Heart right ventricle (tissue), 16 donors: ENCODE measurements at regions of chr17 and their contacts with region 1.

Region 1: DNA sequence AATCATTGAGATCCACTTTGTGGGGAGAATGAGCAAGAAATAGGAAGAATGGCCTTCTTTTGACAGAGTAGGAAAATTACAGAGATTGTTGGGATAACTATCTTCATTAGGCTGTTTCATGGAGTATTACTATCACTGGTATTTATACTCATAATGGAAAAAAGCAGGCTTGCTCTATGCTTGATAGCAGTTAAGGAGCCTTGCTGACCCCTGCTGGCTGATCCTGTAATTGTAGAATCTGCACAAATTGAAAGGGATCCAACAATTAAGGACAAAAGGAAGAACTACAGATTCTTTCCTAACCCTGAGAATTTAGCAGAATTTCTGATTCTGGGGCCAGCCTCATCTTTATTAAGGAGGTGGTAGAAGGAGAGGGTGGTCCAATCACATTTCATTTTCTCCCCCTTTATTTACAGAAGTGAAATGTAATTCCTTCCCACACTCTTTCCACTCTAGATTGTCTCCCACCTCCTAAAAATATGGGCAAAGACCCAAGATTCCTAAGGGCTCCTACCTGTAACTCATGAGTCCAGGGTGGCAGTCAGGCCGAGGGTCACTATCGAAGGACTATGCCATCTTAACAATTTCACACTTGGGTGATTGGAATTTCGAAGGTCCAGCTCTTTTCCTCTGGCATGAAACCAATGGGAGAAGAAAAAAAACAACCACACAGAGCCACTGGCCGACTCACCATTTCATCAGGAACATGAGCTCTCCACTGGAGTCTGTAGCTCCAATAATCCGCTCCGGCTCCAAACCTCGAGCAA is 26.3 kb downstream of the NFE2L1 start:
- DNase-seq: peak; percentile 52 to 84
- ATAC-seq: peak in 7 of 8 donors; percentile 78 to 92 (median 89)
- H3K4me3 ChIP-seq: no peak overlapping the region
- H3K27ac ChIP-seq: peak overlapping the region in 3 of 10 donors; percentile 7 to 45 (median 28)
- H3K4me1 ChIP-seq: peaks cover 0 to 10% (median 5%) of the 10 kb centered on the region in 9 donors
- H3K27me3 ChIP-seq: no peaks in the 10 kb centered on the region
- CTCF ChIP-seq: peak; percentile 73 to 92 (median 85)

Region 2: DNA sequence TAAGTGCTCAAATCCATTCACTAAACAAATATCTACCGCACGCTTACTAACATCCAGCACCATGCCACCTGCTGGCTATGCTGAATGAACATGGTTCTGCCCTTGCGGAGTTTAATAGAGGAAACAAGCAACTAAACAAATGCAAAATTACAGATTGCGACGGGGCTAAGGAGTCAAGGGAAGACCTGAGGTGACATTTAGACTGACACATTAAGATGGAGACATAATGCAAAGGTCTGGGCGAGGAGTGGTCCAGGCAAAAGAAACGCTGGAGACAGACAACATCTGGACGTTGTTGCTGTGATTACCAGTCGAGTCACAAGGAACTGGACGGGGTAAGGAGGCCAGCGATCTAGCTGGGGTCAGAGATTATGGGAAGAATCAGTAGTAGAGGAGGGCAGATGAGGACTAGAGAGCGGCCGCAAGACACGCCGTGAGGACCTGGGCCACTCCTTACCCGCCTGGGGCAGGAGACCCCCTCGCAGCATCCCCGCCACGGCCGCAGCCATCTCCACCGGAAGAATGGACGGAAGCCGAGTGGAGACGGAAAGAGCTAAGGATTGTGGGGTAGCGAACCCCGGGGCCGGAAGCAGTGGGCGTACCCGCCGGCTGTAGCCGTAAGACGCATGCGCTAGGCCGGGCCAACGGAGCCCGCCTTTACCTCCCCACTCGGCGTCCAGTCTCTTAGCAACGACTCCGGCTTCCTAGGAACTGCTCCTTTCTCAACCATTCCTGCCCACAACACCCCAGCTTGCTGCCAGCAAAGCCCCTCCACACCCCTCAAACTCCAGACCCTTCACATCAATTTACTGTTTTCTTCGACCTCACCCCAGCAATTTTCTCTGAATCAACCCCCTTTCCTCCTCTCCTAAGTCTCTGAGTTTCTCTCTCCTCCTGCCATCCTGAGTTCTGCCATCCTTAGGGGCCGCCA is 243.2 kb before region 1 on chr17 and contains the starts of genes LRRC46 and MRPL10:
- intact Hi-C with region 1: no loop called
- DNase-seq: peak; percentile 93 to 94
- ATAC-seq: peak; percentile 93 to 98 (median 97)
- H3K4me3 ChIP-seq: peak within 1 kb of the TSS; percentile 53 to 93 (median 75)
- H3K27ac ChIP-seq: peak within 1 kb of the TSS in 9 of 10 donors; percentile 28 to 90 (median 74)
- H3K4me1 ChIP-seq: peaks cover 8 to 48% (median 33%) of the 10 kb centered on the region in 9 donors
- H3K27me3 ChIP-seq: no peaks in the 10 kb centered on the region
- CTCF ChIP-seq: peak in 2 of 9 donors; percentile 12 to 17
- total RNA-seq, gene LRRC46: 0.14 to 0.53 (median 0.34) TPM in 7 of 10 donors, not detected in the others
- total RNA-seq, gene MRPL10: 44.8 to 72.3 (median 62.9) TPM

Region 3: GRCh38 chr17:47978324-47978723 is 96.2 kb before region 1 on chr17:
- intact Hi-C with region 1: no loop called
- DNase-seq: peak; percentile 42
- ATAC-seq: peak in 7 of 8 donors; percentile 58 to 77 (median 72)
- H3K4me3 ChIP-seq: no peak overlapping the region
- H3K27ac ChIP-seq: no peak overlapping the region
- H3K4me1 ChIP-seq: peaks cover 0 to 28% (median 2%) of the 10 kb centered on the region in 9 donors
- H3K27me3 ChIP-seq: no peaks in the 10 kb centered on the region
- CTCF ChIP-seq: peak; percentile 54 to 79 (median 75)

Region 4: DNA sequence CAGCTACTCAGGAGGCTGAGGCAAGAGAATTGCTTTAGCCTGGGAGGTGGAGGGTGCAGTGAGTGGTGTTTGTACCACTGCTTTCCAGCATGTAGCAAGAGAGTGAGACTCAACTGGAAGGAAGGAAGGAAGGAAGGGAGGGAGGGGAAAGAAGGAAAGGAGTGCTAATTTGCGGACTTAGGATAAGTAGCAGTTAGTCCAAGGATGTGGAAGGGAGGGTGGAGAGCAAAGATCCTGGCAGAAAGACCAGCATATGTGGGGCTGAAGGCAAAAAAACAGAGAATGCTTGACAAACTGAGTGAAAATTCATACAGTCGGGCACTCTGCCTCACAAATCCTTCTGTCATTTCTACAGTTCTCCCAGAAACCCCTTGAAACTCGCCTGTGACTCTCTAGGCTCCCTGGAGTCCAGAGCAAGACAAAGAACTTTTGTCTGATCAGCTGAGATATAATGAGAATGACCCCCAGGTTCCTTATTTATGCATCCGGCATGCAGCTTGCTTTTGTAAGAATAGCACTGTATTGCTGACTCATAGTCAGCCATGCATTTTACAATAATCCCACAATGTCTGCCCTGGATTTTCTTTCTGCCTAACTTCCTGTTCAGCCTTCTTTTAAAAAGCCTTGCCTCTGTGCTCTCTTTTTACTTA is 72.1 kb before region 1 on chr17:
- intact Hi-C with region 1: no loop called
- DNase-seq: no peak
- ATAC-seq: peak; percentile 38 to 89 (median 76)
- H3K4me3 ChIP-seq: no peak overlapping the region
- H3K27ac ChIP-seq: peak overlapping the region in 7 of 10 donors; percentile 35 to 90 (median 54)
- H3K4me1 ChIP-seq: peaks cover 0 to 71% (median 15%) of the 10 kb centered on the region in 9 donors
- H3K27me3 ChIP-seq: peaks cover 0 to 3% (median 0%) of the 10 kb centered on the region in 7 donors
- CTCF ChIP-seq: no peak

Region 5: GRCh38 chr17:48024937-48025906 is 49.3 kb before region 1 on chr17:
- intact Hi-C with region 1: loop called (anchors 1 to 2 kb)
- DNase-seq: peak; percentile 96 to 98
- ATAC-seq: peak; percentile 87 to 95 (median 92)
- H3K4me3 ChIP-seq: peak overlapping the region; percentile 27 to 60 (median 54)
- H3K27ac ChIP-seq: peak overlapping the region; percentile 32 to 89 (median 82)
- H3K4me1 ChIP-seq: peaks cover 18 to 51% (median 41%) of the 10 kb centered on the region in 9 donors
- H3K27me3 ChIP-seq: peaks cover 0 to 28% (median 16%) of the 10 kb centered on the region in 7 donors
- CTCF ChIP-seq: peak; percentile 53 to 88 (median 80)

Region 6: DNA sequence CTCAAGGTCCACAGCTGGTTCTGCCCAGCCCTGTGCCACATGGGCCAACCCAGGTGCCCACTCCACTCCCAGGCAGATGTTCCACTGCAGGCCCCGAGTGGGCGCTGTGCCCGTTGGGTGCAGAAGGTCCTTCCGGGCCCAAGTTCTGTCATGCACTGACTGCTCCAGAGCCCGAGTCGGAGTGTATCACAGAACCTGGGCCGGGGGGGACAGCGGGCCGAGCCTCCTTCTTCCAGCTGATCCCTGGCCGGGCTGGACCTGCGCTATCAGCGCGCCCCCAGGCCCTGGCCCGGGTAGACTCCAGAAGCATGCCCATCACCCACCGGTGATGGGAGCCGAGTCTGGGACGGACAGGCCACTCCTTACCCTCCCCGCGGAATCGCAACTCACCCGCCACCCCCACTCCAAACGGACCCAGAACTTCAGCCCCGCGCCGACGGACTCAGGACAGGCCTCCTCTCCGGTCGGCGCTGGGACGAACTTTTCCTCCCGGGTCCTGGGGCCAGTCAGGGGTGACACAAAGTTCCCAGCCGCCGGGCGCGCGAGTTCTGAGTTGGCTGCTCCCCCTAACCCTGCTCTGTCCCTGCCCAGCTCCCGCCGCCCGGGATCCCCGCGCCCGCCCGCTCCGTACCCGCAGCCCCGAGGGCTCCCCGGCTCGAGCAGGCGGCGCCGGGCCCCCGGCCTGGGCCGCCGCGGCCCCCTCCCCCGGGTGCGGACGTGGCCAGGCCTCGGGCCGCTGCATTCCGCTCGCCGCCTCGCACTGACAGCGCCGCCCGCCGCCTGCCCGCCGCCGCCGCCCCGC is 37.3 kb before region 1 on chr17 and contains the start of gene COPZ2:
- intact Hi-C with region 1: loop called in 1 of 10 experiments (anchors 2 kb)
- DNase-seq: peak; percentile 70 to 75
- ATAC-seq: peak; percentile 85 to 92 (median 90)
- H3K4me3 ChIP-seq: peak within 1 kb of the TSS; percentile 56 to 88 (median 73)
- H3K27ac ChIP-seq: peak within 1 kb of the TSS; percentile 58 to 85 (median 81)
- H3K4me1 ChIP-seq: peaks cover 7 to 17% (median 13%) of the 10 kb centered on the region in 9 donors
- H3K27me3 ChIP-seq: peaks cover 0 to 37% (median 0%) of the 10 kb centered on the region in 7 donors
- CTCF ChIP-seq: peak; percentile 31 to 69 (median 60)
- total RNA-seq, gene COPZ2: 45.3 to 67.3 (median 60.7) TPM

Region 7: GRCh38 chr17:48051706-48052486 is 22.6 kb before region 1 on chr17:
- intact Hi-C with region 1: loop called in 1 of 10 experiments (anchors 2 kb)
- DNase-seq: peak; percentile 55 to 92
- ATAC-seq: peak in 7 of 8 donors; percentile 3 to 36 (median 13)
- H3K4me3 ChIP-seq: peak overlapping the region; percentile 27 to 89 (median 84)
- H3K27ac ChIP-seq: peak overlapping the region; percentile 92 to 99 (median 98)
- H3K4me1 ChIP-seq: peaks cover 45 to 84% (median 76%) of the 10 kb centered on the region in 9 donors
- H3K27me3 ChIP-seq: no peaks in the 10 kb centered on the region
- CTCF ChIP-seq: peak in 4 of 9 donors; percentile 14 to 48 (median 38)

Region 8: GRCh38 chr17:48093341-48094045 is 19.0 kb after region 1 on chr17:
- intact Hi-C with region 1: no loop called
- DNase-seq: no peak
- ATAC-seq: no peak
- H3K4me3 ChIP-seq: no peak overlapping the region
- H3K27ac ChIP-seq: no peak overlapping the region
- H3K4me1 ChIP-seq: peaks cover 0 to 8% (median 0%) of the 10 kb centered on the region in 9 donors
- H3K27me3 ChIP-seq: no peaks in the 10 kb centered on the region
- CTCF ChIP-seq: no peak

Region 9: GRCh38 chr17:48107168-48108132 is 33.0 kb after region 1 on chr17 and contains the start of gene SNX11:
- intact Hi-C with region 1: loop called in 1 of 10 experiments (anchors 2 kb)
- DNase-seq: peak; percentile 91
- ATAC-seq: peak; percentile 97 to 99 (median 98)
- H3K4me3 ChIP-seq: peak within 1 kb of the TSS; percentile 54 to 91 (median 80)
- H3K27ac ChIP-seq: peak within 1 kb of the TSS; percentile 80 to 97 (median 93)
- H3K4me1 ChIP-seq: peaks cover 0 to 64% (median 30%) of the 10 kb centered on the region in 9 donors
- H3K27me3 ChIP-seq: no peaks in the 10 kb centered on the region
- CTCF ChIP-seq: peak in 5 of 9 donors; percentile 4 to 51 (median 24)
- total RNA-seq, gene SNX11: 7.2 to 17.0 (median 12.3) TPM

Region 10: DNA sequence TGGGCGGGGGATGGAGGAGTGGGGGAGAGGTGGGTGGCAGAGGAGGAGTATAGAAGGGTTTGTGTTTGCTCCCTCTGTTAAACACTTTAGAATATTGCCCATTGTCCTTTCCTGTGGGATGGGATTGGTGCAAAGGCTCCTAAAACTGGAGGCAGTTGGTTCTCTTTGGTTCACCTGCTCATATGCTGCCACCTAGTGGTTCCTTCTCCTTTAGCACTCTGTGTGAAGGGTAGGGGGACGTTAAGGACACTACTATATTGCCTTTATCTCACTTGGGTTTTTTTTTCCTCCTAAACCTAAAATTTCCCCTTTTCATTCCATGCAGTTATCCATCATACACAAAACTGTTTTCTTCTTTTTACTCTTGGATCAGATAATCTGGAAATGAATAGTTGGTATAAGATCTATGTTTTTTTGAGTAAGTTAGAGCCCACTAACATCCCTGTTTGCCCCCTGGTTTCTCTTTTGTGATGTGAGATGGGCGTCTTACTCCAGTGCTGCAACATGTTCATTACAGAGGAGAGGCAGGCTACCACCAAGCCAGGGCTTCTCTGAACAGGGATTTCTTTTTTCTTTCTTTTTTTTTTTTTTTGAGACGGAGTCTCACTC is 56.8 kb after region 1 on chr17:
- intact Hi-C with region 1: loop called in 6 of 10 experiments (anchors 2 to 5 kb)
- DNase-seq: peak in 1 of 2 donors; percentile 73
- ATAC-seq: peak; percentile 71 to 91 (median 84)
- H3K4me3 ChIP-seq: no peak overlapping the region
- H3K27ac ChIP-seq: peak overlapping the region in 1 of 10 donors; percentile 64
- H3K4me1 ChIP-seq: peaks cover 0 to 9% (median 0%) of the 10 kb centered on the region in 9 donors
- H3K27me3 ChIP-seq: peaks cover 0 to 3% (median 0%) of the 10 kb centered on the region in 7 donors
- CTCF ChIP-seq: peak; percentile 76 to 90 (median 84)